SK-N-SH (cell line): ENCODE measurements at regions of chr7 and their contacts with region 1.

Region 1: DNA sequence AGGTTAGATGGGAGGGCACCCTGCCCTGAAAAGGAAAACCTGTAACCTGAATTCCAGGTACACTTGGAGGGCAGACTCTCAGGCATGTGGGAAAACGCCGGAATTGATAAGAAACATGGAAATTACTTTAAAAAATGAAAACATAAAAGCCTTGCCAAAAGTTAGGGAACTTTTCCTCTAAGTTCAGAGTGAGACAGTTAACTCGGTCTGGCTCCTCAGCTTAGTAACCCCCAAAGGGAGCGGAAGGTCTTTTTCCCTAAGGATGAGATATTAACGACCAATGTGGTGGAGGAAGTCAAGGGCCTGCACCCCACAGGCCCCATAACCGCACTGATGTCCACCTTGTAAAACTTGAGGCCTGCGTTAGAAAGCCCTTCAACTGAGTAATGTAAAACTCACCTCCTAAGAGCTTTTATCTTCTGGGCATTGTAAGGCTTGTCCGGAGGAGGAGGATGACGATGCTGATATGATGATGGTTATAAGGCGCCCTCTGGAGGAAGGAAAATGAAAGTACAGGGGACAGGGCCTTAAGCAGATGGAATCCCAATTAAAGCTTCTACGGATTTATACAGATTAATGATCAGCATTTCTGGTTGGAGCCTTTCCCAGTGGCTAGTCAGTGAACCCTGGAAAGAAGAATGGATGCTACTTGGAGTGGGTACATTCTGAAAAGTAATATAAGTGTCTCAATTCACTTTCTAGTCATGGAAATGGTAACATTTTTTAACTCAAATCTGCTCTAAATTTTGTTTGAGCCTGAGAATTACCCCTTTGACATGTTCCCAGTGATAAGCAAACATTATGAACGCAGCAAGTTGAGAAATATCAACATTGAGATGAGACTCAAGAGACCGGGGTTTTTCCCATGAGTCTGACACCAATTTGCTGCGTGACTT is 694 bp downstream of the COL1A2 start:
- DNase-seq: peak; percentile 76
- H3K4me3 ChIP-seq: no peak overlapping the region; a peak in 1 of 4 replicates
- H3K27ac ChIP-seq: peak overlapping the region; percentile 50 to 76; a peak in 3 of 4 replicates
- H3K4me1 ChIP-seq: peaks cover 5 to 36% of the 10 kb centered on the region in 2 experiments
- H3K27me3 ChIP-seq: no peaks in the 10 kb centered on the region
- CTCF ChIP-seq: peak; percentile 98
- EP300 ChIP-seq: no peak
- RAD21 ChIP-seq: peak; percentile 94

Region 2: DNA sequence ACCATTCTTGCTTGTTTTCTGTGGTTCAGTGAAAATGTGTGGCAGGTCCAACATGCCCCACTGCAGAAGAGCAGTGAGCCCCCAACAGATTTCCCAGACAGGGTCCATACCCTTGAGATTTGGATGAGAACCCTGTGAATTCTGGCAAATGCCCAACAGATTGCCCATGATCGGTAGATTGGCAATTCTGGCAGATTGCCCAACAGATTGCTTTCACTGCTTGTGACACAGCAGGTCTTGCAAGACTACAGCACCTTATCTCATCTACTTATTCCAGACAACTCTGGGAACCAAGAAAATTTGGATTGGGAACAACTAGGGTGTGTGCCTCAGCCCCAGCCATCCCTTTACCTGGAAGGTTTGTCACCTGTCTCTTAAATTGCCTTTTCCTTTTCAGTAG is 144.4 kb before region 1 on chr7:
- CTCF ChIA-PET with region 1: no interaction called
- POLR2A ChIA-PET with region 1: no interaction called
- DNase-seq: no peak
- H3K4me3 ChIP-seq: no peak overlapping the region
- H3K27ac ChIP-seq: no peak overlapping the region
- H3K4me1 ChIP-seq: peaks cover 0 to 22% of the 10 kb centered on the region in 2 experiments; a peak in 2 of 4 replicates
- H3K27me3 ChIP-seq: no peaks in the 10 kb centered on the region
- CTCF ChIP-seq: no peak
- EP300 ChIP-seq: no peak
- RAD21 ChIP-seq: no peak

Region 3: GRCh38 chr7:94368371-94368791 is 27.0 kb before region 1 on chr7:
- CTCF ChIA-PET with region 1: interaction called, 11 read pairs
- POLR2A ChIA-PET with region 1: no interaction called
- DNase-seq: peak; percentile 62
- H3K4me3 ChIP-seq: peak overlapping the region; percentile 17 to 19; a peak in 2 of 4 replicates
- H3K27ac ChIP-seq: peak overlapping the region; percentile 96 to 100
- H3K4me1 ChIP-seq: peaks cover 35 to 40% of the 10 kb centered on the region in 2 experiments
- H3K27me3 ChIP-seq: no peaks in the 10 kb centered on the region
- CTCF ChIP-seq: no peak
- EP300 ChIP-seq: peak in 1 of 2 experiments; percentile 77; a peak in 3 of 4 replicates
- RAD21 ChIP-seq: peak; percentile 25; the same call in 1 of the 2 replicates